Activated CD4-positive, alpha-beta T cell treated with anti-CD3 and anti-CD28 coated beads, Interleukin-2, amount 10 ng/mL, durations not matched to agents 24 days and 14 days (primary cell): ENCODE measurements at regions of chr5 and their contacts with region 1.

Region 1: GRCh38 chr5:64768358-64769312 is at the starts of genes CWC27 and SREK1IP1:
- DNase-seq: peak; percentile 95
- H3K4me3 Mint-ChIP-seq: peak within 1 kb of the TSS; percentile 97
- H3K27ac Mint-ChIP-seq: peak within 1 kb of the TSS; percentile 94
- H3K4me1 Mint-ChIP-seq: peaks cover 43% of the 10 kb centered on the region
- H3K27me3 Mint-ChIP-seq: no peaks in the 10 kb centered on the region
- total RNA-seq, gene CWC27: 31.8 and 32.4 TPM in 2 replicates
- total RNA-seq, gene SREK1IP1: 31.1 and 34.8 TPM in 2 replicates

Region 2: DNA sequence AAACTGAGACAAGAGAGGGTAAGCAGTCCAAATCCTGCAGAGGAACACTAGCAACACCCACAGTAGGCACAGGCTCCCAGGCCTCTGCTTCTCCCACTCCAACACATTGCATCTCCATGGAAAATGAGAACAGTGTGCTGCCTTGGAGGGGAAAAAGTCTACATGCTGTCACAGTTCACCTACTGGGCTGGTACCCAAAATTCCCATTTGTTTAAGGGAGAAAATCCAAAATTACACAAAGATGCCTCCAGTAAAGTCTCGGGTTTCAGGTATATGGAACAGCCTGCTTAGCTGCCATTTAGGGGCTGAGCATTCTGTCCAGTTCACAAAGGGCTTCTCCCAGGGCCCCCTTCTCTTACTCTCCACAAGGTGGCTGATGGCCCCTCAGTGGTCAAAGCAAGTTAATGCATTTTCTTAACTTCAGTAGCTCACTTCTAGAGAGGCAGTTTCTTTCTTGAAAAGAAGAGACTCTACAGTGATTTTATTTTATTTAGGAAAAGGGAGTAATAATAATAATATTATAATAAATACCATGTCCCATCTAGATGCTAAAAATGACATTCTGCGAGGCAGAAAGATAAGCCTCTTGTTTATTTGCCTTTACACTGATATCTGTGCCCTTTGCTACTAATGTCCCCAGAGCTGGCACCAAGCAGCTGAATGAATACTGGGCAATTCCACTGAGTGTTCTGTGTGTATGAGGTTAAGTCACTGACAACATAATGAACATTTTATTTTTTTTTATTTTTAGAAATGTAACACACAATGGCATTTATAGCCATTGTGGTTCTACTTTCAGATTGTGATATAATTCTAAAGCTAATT is 173.4 kb before region 1 on chr5:
- intact Hi-C with region 1: no loop called
- DNase-seq: no peak
- H3K4me3 Mint-ChIP-seq: no peak overlapping the region
- H3K27ac Mint-ChIP-seq: no peak overlapping the region
- H3K4me1 Mint-ChIP-seq: no peaks in the 10 kb centered on the region
- H3K27me3 Mint-ChIP-seq: peaks cover 2% of the 10 kb centered on the region

Region 3: DNA sequence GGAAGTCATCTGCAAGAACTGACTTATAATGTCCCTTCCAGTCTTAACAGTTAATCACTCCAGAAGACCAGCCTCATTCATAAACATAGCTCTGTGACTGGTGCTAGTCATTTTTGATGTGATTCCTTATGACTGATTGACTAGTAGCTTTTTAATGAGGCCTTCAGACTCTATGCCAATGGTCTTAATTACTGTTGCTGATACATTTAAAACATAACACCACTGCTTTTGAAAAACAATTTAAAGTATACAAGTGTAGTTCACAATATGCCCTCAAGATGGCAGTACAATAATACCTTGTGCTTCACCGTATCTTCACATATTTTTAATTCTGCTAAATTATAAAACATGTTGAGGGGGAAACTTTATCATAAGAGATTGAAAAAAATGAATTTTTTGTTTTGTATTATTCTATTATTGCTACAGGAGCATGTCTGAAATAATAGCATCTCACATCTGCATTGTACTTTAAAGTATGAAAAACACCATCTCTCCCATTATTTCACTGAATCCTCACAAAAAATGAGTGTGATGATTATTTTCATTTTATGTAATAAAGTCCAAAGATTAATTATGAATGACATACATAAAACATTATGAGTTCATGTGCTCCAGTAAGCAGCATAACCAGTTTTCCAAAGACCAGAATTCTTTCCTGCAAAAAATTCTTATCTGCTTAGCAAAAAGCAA is 133.5 kb before region 1 on chr5:
- intact Hi-C with region 1: loop called (anchors 5 kb)
- DNase-seq: no peak
- H3K4me3 Mint-ChIP-seq: no peak overlapping the region
- H3K27ac Mint-ChIP-seq: no peak overlapping the region
- H3K4me1 Mint-ChIP-seq: peaks cover 5% of the 10 kb centered on the region
- H3K27me3 Mint-ChIP-seq: peaks cover 30% of the 10 kb centered on the region

Region 4: GRCh38 chr5:64814073-64814472 is 45.4 kb after region 1 on chr5:
- intact Hi-C with region 1: no loop called
- DNase-seq: no peak
- H3K4me3 Mint-ChIP-seq: no peak overlapping the region
- H3K27ac Mint-ChIP-seq: no peak overlapping the region
- H3K4me1 Mint-ChIP-seq: peaks cover 4% of the 10 kb centered on the region
- H3K27me3 Mint-ChIP-seq: no peaks in the 10 kb centered on the region

Region 5: GRCh38 chr5:65624571-65625555 is 856.2 kb after region 1 on chr5 and contains the starts of genes SHLD3 and TRAPPC13:
- intact Hi-C with region 1: loop called (anchors 2 kb)
- DNase-seq: peak; percentile 95
- H3K4me3 Mint-ChIP-seq: peak within 1 kb of the TSS; percentile 91
- H3K27ac Mint-ChIP-seq: peak within 1 kb of the TSS; percentile 99
- H3K4me1 Mint-ChIP-seq: peaks cover 28% of the 10 kb centered on the region
- H3K27me3 Mint-ChIP-seq: no peaks in the 10 kb centered on the region
- total RNA-seq, gene SHLD3: 4.7 and 5.1 TPM in 2 replicates
- total RNA-seq, gene TRAPPC13: 22.4 and 27.2 TPM in 2 replicates